Activated naive CD4-positive, alpha-beta T cell treated with anti-CD3 and anti-CD28 coated beads for 36 hours (primary cell): ENCODE measurements at regions of chr5 and their contacts with region 1.

Region 1: DNA sequence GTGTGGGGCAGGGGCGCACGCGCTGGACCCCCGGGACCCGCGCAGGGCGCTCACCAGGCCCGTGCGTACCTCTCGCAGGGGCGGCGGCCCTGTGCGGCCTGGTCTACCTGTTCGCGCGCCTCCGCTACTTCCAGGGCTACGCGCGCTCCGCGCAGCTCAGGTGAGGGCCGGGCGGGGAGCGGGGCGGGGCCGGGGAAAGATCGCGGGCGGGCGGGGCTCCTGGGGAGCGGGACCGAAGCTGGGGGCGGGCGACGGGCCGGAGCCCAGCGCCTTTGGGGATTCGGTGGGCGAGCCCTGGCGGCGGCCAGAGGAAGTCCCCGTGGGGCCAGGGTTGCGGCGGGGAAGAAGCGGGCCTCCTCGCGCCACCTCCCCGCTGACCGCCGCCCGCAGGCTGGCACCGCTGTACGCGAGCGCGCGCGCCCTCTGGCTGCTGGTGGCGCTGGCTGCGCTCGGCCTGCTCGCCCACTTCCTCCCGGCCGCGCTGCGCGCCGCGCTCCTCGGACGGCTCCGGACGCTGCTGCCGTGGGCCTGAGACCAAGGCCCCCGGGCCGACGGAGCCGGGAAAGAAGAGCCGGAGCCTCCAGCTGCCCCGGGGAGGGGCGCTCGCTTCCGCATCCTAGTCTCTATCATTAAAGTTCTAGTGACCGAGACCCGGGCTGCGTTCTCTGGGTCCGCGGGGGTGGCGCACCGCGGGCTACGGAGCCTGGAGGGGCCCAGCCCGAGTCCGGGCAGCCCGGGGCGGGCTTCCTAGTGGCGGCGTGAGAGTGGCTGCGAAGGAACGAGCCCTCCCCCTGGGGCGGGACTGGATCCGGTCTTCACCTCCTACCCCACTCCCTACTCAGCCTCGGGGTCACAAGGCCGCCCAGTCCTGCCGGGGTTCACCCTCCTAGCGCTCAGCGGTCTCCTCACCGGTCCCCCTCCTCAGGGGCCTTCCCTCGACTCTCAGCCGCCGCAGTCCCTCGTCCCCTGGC is 2.4 kb downstream of the LTC4S start:
- DNase-seq: peak; percentile 73
- H3K4me3 Mint-ChIP-seq: peak overlapping the region; percentile 59
- H3K27ac Mint-ChIP-seq: no peak overlapping the region
- H3K4me1 Mint-ChIP-seq: peaks cover 23% of the 10 kb centered on the region
- H3K27me3 Mint-ChIP-seq: no peaks in the 10 kb centered on the region

Region 2: DNA sequence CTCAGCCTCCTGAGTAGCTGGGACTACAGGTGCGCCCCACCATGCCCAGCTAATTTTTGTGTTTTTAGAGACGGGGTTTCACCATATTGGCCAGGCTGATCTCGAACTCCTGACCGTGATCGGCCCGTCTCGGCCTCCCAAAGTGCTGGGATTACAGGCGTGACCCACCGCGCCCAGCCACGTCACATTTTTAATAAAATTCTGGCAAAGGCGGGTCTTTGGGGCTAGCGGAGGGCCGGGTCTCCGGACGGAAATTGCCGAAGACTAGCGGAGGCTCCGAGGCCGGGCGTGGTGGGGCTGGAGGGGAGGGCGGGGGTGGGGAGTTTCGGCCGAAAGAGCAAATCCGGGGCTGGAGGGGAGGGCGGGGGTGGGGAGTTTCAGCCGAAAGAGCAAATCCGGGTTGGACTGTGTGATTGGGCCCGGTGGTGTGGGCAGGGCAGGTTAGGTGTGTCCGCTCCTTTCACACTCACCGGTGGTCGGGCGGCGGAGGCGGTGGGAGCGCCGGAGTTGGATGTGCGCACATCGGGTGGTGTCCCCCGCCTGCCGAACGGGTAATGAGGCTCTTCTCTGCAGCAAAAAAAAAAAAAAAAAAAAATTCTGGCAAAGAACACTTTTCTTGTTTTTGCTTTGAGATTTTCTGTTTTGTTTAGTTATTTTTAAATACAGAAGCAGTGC is 218.7 kb before region 1 on chr5:
- CTCF ChIA-PET with region 1: no interaction called
- intact Hi-C with region 1: no loop called
- DNase-seq: no peak
- H3K4me3 Mint-ChIP-seq: no peak overlapping the region
- H3K27ac Mint-ChIP-seq: no peak overlapping the region
- H3K4me1 Mint-ChIP-seq: no peaks in the 10 kb centered on the region
- H3K27me3 Mint-ChIP-seq: no peaks in the 10 kb centered on the region

Region 3: GRCh38 chr5:179678223-179679013 is 117.7 kb before region 1 on chr5:
- CTCF ChIA-PET with region 1: interaction called, 4 read pairs
- intact Hi-C with region 1: loop called (anchors 1 kb)
- DNase-seq: peak; percentile 94
- H3K4me3 Mint-ChIP-seq: peak overlapping the region; percentile 99
- H3K27ac Mint-ChIP-seq: peak overlapping the region; percentile 95
- H3K4me1 Mint-ChIP-seq: peaks cover 36% of the 10 kb centered on the region
- H3K27me3 Mint-ChIP-seq: no peaks in the 10 kb centered on the region

Region 4: DNA sequence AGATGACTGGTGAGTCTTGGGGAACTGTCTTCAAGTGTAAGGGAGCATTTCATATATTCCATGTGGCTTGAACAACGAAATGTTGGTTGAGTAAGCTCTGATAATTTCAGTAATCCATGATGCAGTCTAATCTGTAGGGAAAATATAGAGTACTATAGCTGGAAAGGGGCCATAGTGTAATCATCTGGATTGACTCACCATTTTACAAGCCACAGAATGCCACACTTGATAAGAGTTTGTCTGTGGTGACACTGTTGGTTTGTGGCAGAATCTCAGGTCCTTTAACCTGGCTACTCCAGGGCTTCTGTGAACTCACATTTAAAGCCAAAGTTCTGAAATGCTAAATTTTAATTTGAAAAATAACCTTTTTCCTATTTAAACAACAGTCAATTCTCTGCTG is 79.9 kb before region 1 on chr5:
- CTCF ChIA-PET with region 1: no interaction called
- intact Hi-C with region 1: no loop called
- DNase-seq: no peak
- H3K4me3 Mint-ChIP-seq: no peak overlapping the region
- H3K27ac Mint-ChIP-seq: no peak overlapping the region
- H3K4me1 Mint-ChIP-seq: peaks cover 4% of the 10 kb centered on the region
- H3K27me3 Mint-ChIP-seq: no peaks in the 10 kb centered on the region

Region 5: DNA sequence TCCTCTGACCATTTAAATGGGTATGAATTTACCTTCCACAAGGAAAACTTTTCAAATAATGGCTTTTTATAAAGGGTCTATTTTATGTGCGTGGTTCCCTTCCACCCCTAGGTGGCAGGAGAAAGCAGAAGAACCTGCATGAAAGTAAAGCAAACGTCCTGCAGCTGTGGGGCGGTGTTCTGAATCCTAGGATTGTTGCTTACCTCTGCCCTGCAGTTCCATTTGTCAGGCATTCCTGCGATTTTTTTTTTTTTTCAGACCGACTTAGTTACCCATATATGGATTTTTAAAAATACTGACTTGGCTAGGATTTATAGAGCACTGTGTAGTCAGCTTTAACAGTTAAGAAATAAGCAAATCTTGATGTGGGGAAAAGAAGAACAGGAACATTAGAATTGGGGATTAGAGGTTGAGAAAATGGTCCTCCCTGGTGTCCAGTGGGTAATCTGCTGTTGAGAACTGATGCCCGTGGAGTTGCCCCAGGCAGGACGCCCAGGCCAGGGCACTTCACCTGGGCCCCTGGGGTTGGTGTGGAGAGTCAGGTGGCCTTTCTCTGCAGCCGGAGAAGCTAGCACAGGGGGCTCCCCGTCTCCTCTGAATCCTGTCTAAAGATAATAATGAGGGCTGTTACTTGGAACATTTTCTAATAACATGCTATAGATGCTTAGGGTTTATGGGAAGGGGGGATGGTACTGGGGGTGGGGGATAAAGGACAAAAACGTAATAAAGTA is 32.8 kb before region 1 on chr5:
- CTCF ChIA-PET with region 1: interaction called, 16 read pairs
- intact Hi-C with region 1: loop called (anchors 1 kb)
- DNase-seq: peak; percentile 75
- H3K4me3 Mint-ChIP-seq: no peak overlapping the region
- H3K27ac Mint-ChIP-seq: no peak overlapping the region
- H3K4me1 Mint-ChIP-seq: peaks cover 61% of the 10 kb centered on the region
- H3K27me3 Mint-ChIP-seq: no peaks in the 10 kb centered on the region

Region 6: DNA sequence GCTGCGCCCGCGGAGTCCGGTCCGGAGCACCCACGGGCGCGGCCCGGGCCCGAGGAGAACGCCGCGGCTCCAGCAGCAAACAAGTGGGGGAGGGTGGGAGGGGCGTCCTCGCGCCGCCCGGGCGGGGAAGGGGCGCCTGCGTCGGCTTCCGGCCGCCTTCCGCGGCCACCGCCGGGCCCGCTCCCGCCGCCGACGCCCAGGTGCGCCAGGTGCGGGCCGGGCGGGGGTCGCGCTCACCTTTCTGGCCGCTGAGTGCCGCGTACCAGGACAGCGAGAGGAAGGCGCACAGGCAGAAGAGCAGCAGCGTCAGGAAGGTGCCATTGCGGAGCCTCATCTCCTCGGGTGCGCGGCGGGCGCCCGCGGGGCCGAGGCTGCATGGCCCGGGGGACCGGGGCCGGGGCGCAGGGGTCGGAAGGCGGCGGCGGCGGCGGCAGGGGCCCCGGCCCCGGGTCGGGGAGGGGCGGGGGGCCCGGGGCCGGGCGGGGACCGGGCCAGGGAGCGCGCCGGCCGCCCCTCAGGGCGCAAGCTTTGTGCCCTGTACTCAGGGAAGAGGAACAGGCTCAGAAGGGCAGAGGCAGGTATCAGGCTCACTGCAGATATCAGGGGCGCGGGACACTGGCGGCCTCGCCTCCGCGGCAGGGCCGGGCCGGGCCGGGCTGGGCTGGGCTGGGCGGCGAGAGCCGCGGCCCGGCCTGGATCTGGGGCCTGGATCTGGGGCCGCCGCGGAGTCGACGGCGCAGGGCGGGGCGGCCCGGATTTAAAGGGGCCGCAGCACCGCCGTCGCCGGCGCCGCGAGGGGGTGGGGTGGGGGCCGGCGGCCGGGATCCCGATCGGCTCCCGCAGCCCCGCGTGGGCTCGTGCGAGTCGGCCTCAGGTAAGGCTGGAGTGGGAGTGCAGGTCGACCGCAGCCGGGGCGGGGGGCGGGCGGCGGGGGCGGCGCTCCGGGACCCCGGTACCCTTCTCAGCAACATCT is 10.4 kb after region 1 on chr5 and contains the start of gene MGAT4B:
- CTCF ChIA-PET with region 1: interaction called, 11 read pairs
- intact Hi-C with region 1: no loop called
- DNase-seq: peak; percentile 62
- H3K4me3 Mint-ChIP-seq: peak within 1 kb of the TSS; percentile 84
- H3K27ac Mint-ChIP-seq: no peak within 1 kb of the TSS
- H3K4me1 Mint-ChIP-seq: peaks cover 38% of the 10 kb centered on the region
- H3K27me3 Mint-ChIP-seq: no peaks in the 10 kb centered on the region
- total RNA-seq, gene MGAT4B: 57.7 to 59.9 TPM